ENCODE measurements at regions of chr12 and their contacts with region 1.

Region 1: GRCh38 chr12:52380271-52380694 is 5.2 kb downstream of the KRT84 start:
- DNase-seq: no peak
- H3K4me3 ChIP-seq: no peak overlapping the region
- H3K27ac ChIP-seq: no peak overlapping the region
- H3K4me1 ChIP-seq: no peaks in the 10 kb centered on the region
- H3K27me3 ChIP-seq: no peaks in the 10 kb centered on the region
- CTCF ChIP-seq: no peak
- EP300 ChIP-seq: no peak
- POLR2A ChIP-seq: no peak

Region 2: DNA sequence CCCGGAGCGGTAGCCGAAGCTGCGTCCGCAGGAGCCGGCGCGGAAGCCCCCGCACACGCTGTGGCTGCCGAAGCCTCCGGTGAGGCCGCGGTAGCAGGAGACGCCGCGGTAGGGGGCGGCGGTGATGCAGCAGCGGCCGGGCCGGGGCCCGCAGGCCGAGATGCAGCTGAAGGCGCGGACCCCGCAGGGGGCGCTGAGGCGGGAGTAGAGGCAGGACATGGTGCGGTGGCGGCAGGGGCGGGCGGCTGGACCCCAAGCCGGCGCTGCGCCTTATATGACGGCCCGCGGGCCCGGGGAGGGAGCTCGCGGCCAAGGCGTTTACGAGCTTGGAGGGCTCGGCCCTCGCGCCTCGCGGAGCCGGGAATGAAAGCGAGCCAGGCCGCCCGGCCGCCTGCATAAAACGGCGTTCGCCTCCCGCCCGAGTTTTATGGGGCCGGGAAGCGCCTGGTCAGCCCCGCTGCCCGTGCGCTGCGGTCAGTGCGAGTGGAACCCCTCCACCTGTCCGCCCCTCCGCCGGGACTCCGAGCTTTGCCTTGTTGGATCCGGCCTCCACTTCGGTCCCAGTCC is 121.9 kb before region 1 on chr12:
- intact Hi-C with region 1: no loop called
- DNase-seq: peak in 1 of 5 donors; percentile 52
- H3K4me3 ChIP-seq: no peak overlapping the region
- H3K27ac ChIP-seq: no peak overlapping the region
- H3K4me1 ChIP-seq: peaks cover 3% of the 10 kb centered on the region
- H3K27me3 ChIP-seq: no peaks in the 10 kb centered on the region
- CTCF ChIP-seq: no peak
- EP300 ChIP-seq: no peak
- POLR2A ChIP-seq: no peak

Region 3: GRCh38 chr12:52396656-52397055 is 16.4 kb after region 1 on chr12:
- intact Hi-C with region 1: loop called in 1 of 4 experiments (anchors 1 kb)
- DNase-seq: no peak
- H3K4me3 ChIP-seq: no peak overlapping the region
- H3K27ac ChIP-seq: no peak overlapping the region
- H3K4me1 ChIP-seq: no peaks in the 10 kb centered on the region
- H3K27me3 ChIP-seq: no peaks in the 10 kb centered on the region
- CTCF ChIP-seq: no peak
- EP300 ChIP-seq: no peak
- POLR2A ChIP-seq: no peak

Region 4: DNA sequence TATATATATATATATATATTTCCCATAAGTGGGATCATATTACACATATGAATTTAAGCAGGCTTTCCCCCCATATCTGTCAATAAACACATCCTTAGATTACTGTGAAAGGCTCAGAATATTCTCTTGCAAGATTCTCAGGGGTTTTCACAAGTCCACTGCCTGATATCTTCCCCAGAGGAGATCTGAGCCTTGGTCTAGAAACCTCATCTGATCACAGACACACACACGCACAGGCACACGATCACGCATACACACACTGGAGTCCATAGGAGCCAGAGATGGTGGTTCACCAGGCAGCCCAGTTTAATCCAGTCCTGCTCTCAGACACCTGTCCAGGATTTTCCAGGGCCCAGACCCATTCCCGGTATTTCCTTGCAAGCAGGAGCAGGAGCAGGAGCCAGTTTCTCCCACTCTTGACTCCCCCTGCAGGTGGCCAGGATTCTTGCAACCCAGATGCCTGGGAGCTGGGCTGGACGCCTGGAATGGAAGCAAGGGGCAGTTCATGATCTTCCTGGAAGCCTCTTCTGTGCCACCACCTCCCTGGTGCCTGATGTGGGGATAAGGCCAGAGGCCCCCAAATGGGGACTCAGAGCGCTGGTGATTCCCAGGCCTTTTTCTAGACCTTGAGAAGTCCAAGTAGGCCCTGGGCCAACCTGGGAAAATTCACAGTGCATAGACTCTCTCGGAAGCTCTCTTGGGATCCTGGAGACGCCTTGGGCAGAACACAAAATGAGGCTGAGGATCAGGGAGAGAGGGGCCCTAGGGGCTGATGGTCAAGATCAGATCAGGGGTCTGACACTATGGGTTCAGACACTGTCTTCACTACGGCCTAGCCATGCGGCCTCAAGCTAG is 485.0 kb after region 1 on chr12:
- intact Hi-C with region 1: loop called in 1 of 4 experiments (anchors 10 kb)
- DNase-seq: peak in 3 of 5 donors; percentile 41 to 67 (median 45)
- H3K4me3 ChIP-seq: no peak overlapping the region
- H3K27ac ChIP-seq: no peak overlapping the region
- H3K4me1 ChIP-seq: no peaks in the 10 kb centered on the region
- H3K27me3 ChIP-seq: no peaks in the 10 kb centered on the region
- CTCF ChIP-seq: peak in 1 of 3 donors; percentile 35
- EP300 ChIP-seq: no peak
- POLR2A ChIP-seq: no peak

Region 5: DNA sequence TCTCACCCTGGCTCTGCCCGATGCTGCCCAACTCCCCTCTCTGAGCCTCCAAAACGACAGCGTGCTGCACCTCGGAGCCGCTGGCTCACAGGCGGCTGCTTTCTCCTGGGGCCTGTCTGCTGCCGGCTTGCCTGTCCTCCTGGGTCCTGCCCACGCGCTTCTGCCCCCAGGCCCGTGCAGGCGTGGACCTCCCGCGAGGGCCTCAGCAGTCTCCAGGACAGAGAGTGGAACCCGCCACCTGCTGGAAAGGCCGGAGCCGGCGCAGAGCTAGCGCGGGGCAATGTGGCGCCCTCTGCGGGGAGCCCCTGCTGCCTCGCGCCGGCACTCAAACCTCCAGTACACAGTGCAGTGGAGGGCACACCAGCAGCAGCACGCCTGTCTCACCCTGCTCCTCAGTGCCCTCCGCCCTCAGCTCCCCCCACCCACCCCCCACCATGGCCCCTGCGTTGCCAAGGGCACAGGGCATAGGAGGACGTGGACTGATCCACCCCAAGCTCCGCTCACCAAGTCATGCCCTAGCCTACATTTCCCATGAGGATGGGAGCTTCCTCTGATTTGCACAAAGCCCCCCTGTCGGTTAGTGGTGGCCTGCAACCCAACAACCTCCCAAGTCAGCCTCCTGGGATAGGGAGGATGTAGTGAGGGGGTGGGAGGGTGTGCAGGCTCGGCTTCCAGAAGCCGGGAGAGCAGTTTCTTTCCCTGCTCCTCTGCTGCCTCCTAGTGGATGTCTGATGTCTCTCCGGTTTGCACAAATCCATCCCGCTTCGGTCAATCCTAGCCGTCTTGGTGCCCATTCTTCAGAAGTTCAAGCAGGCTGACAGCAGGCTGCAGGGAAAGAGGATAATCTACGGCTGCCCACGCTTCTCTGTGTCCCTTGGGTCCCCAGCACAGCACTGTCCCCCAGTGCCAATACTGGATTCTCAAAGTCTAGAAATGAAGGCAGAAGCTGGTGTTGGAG is 499.4 kb after region 1 on chr12:
- intact Hi-C with region 1: loop called in 1 of 4 experiments (anchors 5 kb)
- DNase-seq: peak; percentile 68 to 80 (median 77)
- H3K4me3 ChIP-seq: no peak overlapping the region
- H3K27ac ChIP-seq: no peak overlapping the region
- H3K4me1 ChIP-seq: peaks cover 4% of the 10 kb centered on the region
- H3K27me3 ChIP-seq: no peaks in the 10 kb centered on the region
- CTCF ChIP-seq: peak; percentile 71 to 76 (median 74)
- EP300 ChIP-seq: no peak
- POLR2A ChIP-seq: no peak